HepG2 (cell line): ENCODE measurements at regions of chr20 and their contacts with region 1.

Region 1: GRCh38 chr20:3767427-3768341 is at the start of gene ADISSP:
- DNase-seq: peak; percentile 99
- ATAC-seq: peak; percentile 92
- H3K4me3 ChIP-seq: peak within 1 kb of the TSS; percentile 72 to 93 (median 89)
- H3K27ac ChIP-seq: peak within 1 kb of the TSS; percentile 75
- H3K4me1 ChIP-seq: peaks cover 74% of the 10 kb centered on the region
- H3K27me3 ChIP-seq: no peaks in the 10 kb centered on the region
- CTCF ChIP-seq: peak; percentile 74
- EP300 ChIP-seq: 0 out of 4 replicates have a peak, but pooled peaks of 1 of the 2 experiments have one; percentile 10
- POLR2A ChIP-seq: peak; percentile 82 to 97
- RAD21 ChIP-seq: peak; percentile 23
- total RNA-seq, gene ADISSP: 70.0 and 90.6 TPM in 2 replicates

Region 2: DNA sequence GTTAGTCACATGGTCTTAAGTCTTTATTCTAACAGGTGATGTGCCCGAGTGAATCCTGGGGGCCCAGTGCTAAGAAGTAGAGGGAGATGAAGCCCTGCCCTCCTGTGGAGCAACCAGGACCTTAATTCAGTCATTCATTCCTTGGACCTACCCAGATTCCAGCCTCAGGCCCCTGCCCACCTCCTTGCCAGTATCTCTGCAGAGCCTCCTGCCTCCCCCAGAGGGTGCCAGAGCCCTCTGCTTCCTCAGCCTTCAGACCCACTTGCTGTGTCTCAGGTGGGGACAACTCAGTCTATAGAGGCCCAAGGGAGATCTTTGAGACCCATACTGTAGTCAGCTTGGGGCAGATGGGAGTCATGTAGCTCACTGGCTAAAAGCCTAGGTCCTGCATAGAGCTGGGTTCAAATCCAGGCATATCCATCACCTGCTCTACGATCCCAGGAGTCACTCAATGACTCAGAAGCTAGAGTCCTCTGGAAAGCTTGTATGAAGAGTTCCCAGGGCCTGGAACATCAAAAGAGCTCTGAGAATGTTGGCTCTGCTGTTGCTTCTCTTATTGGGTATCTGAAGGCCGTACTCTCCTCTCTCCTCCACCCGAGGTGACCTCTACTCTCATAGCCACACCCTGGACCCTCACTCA is 51.4 kb before region 1 on chr20:
- CTCF ChIA-PET with region 1: interaction called, 11 read pairs
- POLR2A ChIA-PET with region 1: interaction called, 4 read pairs
- in situ Hi-C with region 1: no loop called
- intact Hi-C with region 1: loop called (anchors 1 kb)
- DNase-seq: peak; percentile 65
- ATAC-seq: peak; percentile 94
- H3K4me3 ChIP-seq: no peak overlapping the region
- H3K27ac ChIP-seq: no peak overlapping the region
- H3K4me1 ChIP-seq: no peaks in the 10 kb centered on the region
- H3K27me3 ChIP-seq: peaks cover 0 to 26% of the 10 kb centered on the region in 2 experiments; a peak in 4 of 5 replicates
- CTCF ChIP-seq: peak; percentile 96
- EP300 ChIP-seq: no peak
- POLR2A ChIP-seq: no peak
- RAD21 ChIP-seq: peak; percentile 86

Region 3: DNA sequence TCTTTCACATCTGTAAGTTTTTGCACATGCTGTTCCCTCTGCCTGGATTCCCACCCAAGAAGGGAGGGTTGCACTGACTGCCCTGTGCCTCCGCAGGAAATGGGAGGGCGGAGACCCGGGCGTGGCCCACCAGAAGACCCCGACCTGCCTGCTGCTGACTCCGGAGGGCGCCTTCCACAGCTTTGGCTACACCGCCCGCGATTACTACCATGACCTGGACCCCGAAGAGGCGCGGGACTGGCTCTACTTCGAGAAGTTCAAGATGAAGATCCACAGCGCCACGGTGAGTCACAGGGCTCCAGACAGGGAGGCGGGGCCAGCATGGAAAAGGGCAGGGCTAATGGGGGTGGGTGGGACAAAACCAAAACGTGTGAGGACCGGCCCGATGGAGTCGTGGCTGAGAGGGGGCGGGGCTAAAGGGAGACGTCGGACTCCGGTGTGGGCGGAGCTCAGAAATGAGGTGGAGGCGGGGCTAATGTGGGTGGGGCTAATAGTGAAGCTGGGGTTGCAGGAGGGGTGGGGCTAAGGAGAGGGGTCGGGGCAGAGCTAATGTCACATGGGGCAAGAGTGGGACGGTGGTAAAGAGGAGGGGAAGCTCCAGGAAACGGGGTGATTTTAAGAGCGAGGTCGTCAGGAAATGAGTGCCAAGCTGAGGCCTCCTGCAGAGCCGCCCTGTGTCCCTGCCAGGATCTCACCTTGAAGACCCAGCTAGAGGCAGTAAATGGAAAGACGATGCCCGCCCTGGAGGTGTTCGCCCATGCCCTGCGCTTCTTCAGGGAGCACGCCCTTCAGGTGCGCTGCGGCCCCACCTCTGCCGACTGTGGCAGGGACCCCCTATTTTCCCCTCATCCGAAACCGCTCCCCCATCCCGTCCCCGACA is 22.6 kb before region 1 on chr20:
- CTCF ChIA-PET with region 1: interaction called, 10 read pairs
- POLR2A ChIA-PET with region 1: interaction called, 11 read pairs
- in situ Hi-C with region 1: no loop called
- intact Hi-C with region 1: no loop called
- DNase-seq: peak; percentile 74
- ATAC-seq: peak; percentile 16
- H3K4me3 ChIP-seq: peak overlapping the region; percentile 29 to 64 (median 32)
- H3K27ac ChIP-seq: no peak overlapping the region
- H3K4me1 ChIP-seq: peaks cover 61% of the 10 kb centered on the region
- H3K27me3 ChIP-seq: peaks cover 10 to 47% of the 10 kb centered on the region in 2 experiments; a peak in 4 of 5 replicates
- CTCF ChIP-seq: peak; percentile 47
- EP300 ChIP-seq: no peak
- POLR2A ChIP-seq: no peak
- RAD21 ChIP-seq: no peak

Region 4: DNA sequence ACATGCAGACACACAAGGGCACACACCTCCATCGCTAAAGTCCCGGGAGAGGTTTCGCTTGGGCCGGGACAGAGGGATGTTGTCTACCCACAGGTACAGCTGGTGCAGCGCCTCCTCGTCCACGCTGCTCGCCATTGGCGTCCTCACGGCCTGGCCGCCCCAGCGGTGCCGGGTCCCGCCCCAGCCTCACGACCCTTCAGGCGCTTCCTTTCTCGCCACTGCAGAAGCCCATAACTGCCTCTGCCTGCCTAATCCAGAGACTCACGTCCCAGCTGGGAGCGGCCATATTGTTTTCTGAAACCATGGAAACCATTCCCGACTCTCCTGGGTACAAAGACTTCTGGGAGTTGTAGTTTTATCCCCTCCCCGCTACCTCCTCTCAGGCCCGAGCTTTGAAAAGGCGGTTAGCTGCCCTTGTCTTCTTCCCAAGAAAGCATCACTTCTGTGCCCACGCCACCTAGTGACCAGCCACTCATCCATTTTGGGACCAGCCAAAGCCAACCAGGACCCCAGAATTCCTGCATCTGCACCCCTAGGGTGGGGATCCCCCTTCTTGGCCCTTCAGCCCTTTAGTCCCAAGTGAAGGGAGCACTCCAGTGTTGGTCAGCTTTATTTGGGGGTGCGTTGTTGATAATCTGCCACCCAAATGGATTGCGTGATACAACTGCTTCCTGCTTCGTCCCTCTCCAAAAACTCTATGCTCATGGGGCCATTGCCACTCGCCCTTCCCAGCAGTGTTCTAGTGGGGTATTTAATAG is 13.6 kb after region 1 on chr20 and contains the start of gene SPEF1:
- CTCF ChIA-PET with region 1: interaction called, 3 read pairs
- POLR2A ChIA-PET with region 1: interaction called, 74 read pairs
- in situ Hi-C with region 1: no loop called
- intact Hi-C with region 1: loop called (anchors 1 kb)
- DNase-seq: peak; percentile 98
- ATAC-seq: peak; percentile 80
- H3K4me3 ChIP-seq: peak within 1 kb of the TSS; percentile 51 to 75 (median 59); a peak in 5 of 6 replicates
- H3K27ac ChIP-seq: no peak within 1 kb of the TSS
- H3K4me1 ChIP-seq: peaks cover 76% of the 10 kb centered on the region
- H3K27me3 ChIP-seq: peaks cover 2 to 31% of the 10 kb centered on the region in 2 experiments
- CTCF ChIP-seq: peak; percentile 79
- EP300 ChIP-seq: no peak
- POLR2A ChIP-seq: no peak
- RAD21 ChIP-seq: peak; percentile 63
- total RNA-seq, gene SPEF1: 0.27 and 0.32 TPM in 2 replicates

Region 5: DNA sequence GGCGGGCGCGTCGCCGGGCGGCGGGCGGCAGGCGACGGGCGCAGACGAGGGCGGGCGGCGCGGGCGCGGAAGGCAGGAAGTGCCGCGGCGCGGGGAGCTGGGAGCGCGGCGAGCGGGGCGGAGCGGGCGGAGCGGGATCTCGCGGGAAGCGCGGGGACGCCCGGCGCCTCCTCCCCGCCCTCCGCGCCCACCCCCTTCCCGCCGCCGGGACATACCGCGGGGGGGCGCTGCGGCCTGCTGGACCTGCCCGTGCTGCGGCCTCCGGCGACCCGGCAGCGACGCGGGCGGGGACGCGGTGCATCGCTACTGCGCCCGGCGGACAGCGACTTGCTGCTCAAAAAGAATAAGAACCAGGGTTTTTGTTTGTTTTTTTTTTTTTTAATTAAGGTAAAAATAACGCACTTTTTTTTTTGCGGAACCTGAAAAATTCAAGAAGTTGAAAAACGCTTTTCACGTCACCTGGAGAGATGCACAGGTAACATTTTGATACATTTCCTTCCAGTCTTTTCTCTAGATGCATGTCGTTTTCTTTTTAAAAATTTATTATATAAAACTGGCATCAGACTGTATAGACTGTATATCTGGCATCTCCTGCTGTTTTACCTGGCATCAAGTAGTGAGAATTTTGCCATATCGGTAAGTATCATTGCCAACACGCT is 19.1 kb after region 1 on chr20 and contains the start of gene CENPB:
- CTCF ChIA-PET with region 1: interaction called, 3 read pairs
- POLR2A ChIA-PET with region 1: interaction called, 74 read pairs
- in situ Hi-C with region 1: no loop called
- intact Hi-C with region 1: loop called (anchors 1 kb)
- DNase-seq: peak; percentile 83
- ATAC-seq: peak; percentile 83
- H3K4me3 ChIP-seq: peak within 1 kb of the TSS; percentile 57 to 82 (median 82)
- H3K27ac ChIP-seq: peak within 1 kb of the TSS; percentile 34
- H3K4me1 ChIP-seq: peaks cover 79% of the 10 kb centered on the region
- H3K27me3 ChIP-seq: peaks cover 0 to 18% of the 10 kb centered on the region in 2 experiments; a peak in 3 of 5 replicates
- CTCF ChIP-seq: peak; percentile 83
- EP300 ChIP-seq: no peak
- POLR2A ChIP-seq: peak in 1 of 2 experiments; percentile 69; a peak in 1 of 4 replicates
- RAD21 ChIP-seq: peak; percentile 97
- total RNA-seq, gene CENPB: 42.9 and 54.5 TPM in 2 replicates